ENCODE measurements at regions of chr17 and their contacts with region 1.

Region 1: DNA sequence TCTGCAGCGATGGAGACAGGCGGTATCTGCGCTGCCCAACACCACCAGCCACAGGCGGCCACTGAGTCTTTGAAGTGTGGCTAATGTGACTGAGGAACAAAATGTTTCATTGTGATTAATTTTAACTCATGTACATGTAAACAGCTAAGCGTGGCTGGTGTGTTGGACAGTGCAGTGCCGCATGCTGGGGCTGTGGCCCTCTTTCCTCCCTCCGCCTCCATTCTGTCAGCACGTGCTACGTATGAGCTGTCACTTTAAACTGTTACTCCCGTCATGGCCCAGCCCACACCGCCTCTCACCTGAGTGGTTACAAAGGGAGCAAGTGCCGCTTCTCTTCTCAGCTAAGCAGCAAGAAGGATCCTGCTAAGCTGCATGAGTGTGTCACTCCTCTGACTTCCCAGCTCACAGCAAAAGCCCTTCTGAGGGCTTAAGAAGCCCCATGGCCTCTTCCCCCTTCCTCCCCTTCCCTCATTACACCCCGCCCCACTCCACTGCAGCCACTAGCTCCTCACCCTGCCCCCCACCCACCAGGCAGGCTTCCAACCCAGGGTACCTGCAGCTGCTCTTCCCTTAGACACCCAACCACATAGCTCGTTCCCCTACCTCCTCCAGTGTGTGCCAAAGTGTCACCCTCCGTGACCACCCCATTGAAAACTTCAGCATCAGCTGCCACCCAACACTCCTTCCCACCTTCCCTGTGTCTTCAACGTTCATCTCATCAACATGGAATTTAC is 15.0 kb downstream of the HASPIN start:
- DNase-seq: no peak
- H3K4me3 ChIP-seq: no peak overlapping the region
- H3K27ac ChIP-seq: peak overlapping the region; percentile 44 to 68 (median 54)
- H3K4me1 ChIP-seq: peaks cover 0 to 17% (median 14%) of the 10 kb centered on the region in 4 donors
- H3K27me3 ChIP-seq: no peaks in the 10 kb centered on the region
- CTCF ChIP-seq: peak in 1 of 4 experiments; percentile 5
- EP300 ChIP-seq: no peak
- POLR2A ChIP-seq: no peak

Region 2: GRCh38 chr17:3845621-3846441 is 107.1 kb after region 1 on chr17 and contains the start of gene NCBP3:
- intact Hi-C with region 1: loop called (anchors 1 kb)
- DNase-seq: peak; percentile 95
- H3K4me3 ChIP-seq: peak within 1 kb of the TSS; percentile 78 to 100 (median 88)
- H3K27ac ChIP-seq: peak within 1 kb of the TSS; percentile 91 to 97 (median 93)
- H3K4me1 ChIP-seq: peaks cover 0 to 22% (median 19%) of the 10 kb centered on the region in 4 donors
- H3K27me3 ChIP-seq: no peaks in the 10 kb centered on the region
- CTCF ChIP-seq: peak; percentile 86 to 92 (median 90)
- EP300 ChIP-seq: no peak
- POLR2A ChIP-seq: peak; percentile 70 to 77
- total RNA-seq, gene NCBP3: 20.9 to 23.0 (median 21.7) TPM

Region 3: DNA sequence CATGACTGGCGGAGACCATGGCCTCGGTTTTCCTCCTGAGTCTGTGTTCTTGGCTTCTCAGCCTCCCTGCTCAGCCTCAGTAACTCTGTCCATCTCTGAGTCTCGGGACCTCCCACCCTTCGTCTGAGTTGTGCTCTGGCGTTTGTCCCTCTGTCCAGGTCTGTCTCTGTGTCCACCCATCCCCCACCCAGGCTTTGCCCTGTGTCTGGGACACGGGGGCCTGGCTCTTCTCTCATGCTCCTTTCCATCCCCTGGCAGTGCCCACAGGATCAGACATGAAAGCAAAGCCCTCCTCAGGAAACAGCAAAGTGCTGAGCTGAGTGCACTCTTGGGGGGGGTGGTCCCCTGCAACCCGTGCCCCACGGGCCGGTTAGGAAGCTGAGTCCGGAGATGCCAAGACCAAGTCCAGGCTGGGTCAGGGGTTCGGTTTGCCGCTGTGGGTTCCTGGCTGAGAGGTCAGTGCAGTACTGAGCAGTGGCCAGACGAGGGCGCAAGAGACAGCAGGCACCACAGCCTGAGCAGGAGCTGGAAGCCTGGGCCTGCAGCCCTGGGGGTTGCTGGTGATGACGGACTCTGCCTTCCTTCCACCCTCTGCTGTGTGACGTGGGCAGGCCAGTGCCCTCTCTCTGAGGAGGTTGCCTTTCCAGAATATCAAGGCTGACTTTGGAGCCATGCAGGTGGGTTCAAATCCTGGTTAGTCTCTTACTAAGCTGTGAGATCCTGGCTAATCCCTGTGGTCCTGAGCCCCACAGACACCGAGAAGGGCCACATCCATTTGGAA is 175.0 kb after region 1 on chr17:
- intact Hi-C with region 1: loop called (anchors 10 kb)
- DNase-seq: peak; percentile 88
- H3K4me3 ChIP-seq: peak overlapping the region in 2 of 4 donors; percentile 35 to 37
- H3K27ac ChIP-seq: peak overlapping the region; percentile 45 to 75 (median 60)
- H3K4me1 ChIP-seq: peaks cover 0 to 21% (median 9%) of the 10 kb centered on the region in 4 donors
- H3K27me3 ChIP-seq: no peaks in the 10 kb centered on the region
- CTCF ChIP-seq: peak; percentile 86 to 98 (median 96)
- EP300 ChIP-seq: no peak
- POLR2A ChIP-seq: no peak